CD4-positive, alpha-beta T cell (primary cell): ENCODE measurements at regions of chr11 and their contacts with region 1.

Region 1: GRCh38 chr11:75233742-75234172 is 6.8 kb upstream of the TPBGL start:
- DNase-seq: peak in 5 of 14 experiments; percentile 4 to 48 (median 28)
- ATAC-seq: no peak
- H3K4me3 ChIP-seq: no peak overlapping the region
- H3K4me3 Mint-ChIP-seq: no peak overlapping the region
- H3K27ac ChIP-seq: no peak overlapping the region
- H3K27ac Mint-ChIP-seq: no peak overlapping the region
- H3K4me1 ChIP-seq: no peaks in the 10 kb centered on the region
- H3K4me1 Mint-ChIP-seq: no peaks in the 10 kb centered on the region
- H3K27me3 ChIP-seq: peaks cover 5 to 10% of the 10 kb centered on the region in 2 experiments
- H3K27me3 Mint-ChIP-seq: peaks cover 55% of the 10 kb centered on the region
- CTCF ChIP-seq: no peak

Region 2: GRCh38 chr11:75214411-75214821 is 19.3 kb before region 1 on chr11:
- CTCF ChIA-PET with region 1: no interaction called
- POLR2A ChIA-PET with region 1: no interaction called
- intact Hi-C with region 1: loop called in 1 of 2 experiments (anchors 2 kb)
- DNase-seq: peak; percentile 61 to 84 (median 73)
- ATAC-seq: peak; percentile 73
- H3K4me3 ChIP-seq: no peak overlapping the region
- H3K4me3 Mint-ChIP-seq: no peak overlapping the region
- H3K27ac ChIP-seq: no peak overlapping the region
- H3K27ac Mint-ChIP-seq: no peak overlapping the region
- H3K4me1 ChIP-seq: no peaks in the 10 kb centered on the region
- H3K4me1 Mint-ChIP-seq: no peaks in the 10 kb centered on the region
- H3K27me3 ChIP-seq: peaks cover 4 to 6% of the 10 kb centered on the region in 2 experiments
- H3K27me3 Mint-ChIP-seq: peaks cover 52% of the 10 kb centered on the region
- CTCF ChIP-seq: no peak

Region 3: DNA sequence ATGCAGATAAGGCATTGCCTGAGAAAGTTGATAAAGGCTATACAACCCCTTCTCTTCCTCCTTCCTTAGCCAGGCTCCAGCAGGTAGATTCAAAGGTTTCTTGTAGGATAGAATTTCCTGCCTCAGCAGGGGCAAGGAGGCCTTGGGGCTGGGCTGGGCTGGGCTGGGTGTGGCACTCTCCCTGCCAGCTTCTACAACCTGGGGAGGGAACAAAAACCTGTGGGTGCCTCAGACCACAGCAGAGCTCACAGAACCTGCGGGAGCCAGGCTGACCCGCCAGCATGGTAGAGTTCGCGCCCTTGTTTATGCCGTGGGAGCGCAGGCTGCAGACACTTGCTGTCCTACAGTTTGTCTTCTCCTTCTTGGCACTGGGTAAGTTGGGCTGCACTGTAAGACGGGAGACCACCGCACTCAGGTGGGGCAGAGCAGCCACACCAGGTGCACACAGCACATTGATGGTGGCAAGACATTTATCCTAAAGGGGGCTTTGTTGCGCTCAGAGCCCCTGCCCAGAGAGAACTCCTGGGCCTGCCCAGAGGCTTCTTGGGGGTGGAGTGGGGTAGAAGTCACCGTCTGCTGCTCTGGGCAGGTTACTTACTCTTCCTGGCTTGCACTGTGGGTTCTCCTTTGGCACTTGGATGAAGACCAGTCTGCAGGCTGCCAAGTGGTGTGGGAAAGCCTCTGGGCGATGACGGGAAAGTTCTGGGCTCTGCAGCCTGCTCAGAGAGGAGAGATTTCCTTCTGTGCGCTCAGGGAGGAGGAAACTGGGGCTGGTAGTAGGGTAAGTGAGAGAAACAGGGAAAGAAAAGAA is 484.1 kb after region 1 on chr11 and contains the start of gene MOGAT2:
- CTCF ChIA-PET with region 1: no interaction called
- POLR2A ChIA-PET with region 1: no interaction called
- intact Hi-C with region 1: no loop called
- DNase-seq: peak in 1 of 14 experiments; percentile 4
- ATAC-seq: no peak
- H3K4me3 ChIP-seq: no peak within 1 kb of the TSS
- H3K4me3 Mint-ChIP-seq: no peak within 1 kb of the TSS
- H3K27ac ChIP-seq: no peak within 1 kb of the TSS
- H3K27ac Mint-ChIP-seq: no peak within 1 kb of the TSS
- H3K4me1 ChIP-seq: no peaks in the 10 kb centered on the region
- H3K4me1 Mint-ChIP-seq: no peaks in the 10 kb centered on the region
- H3K27me3 ChIP-seq: no peaks in the 10 kb centered on the region
- H3K27me3 Mint-ChIP-seq: no peaks in the 10 kb centered on the region
- CTCF ChIP-seq: no peak
- total RNA-seq, gene MOGAT2: not detected